Gastrocnemius medialis (tissue), 4 donors: ENCODE measurements at regions of chr7 and their contacts with region 1.

Region 1: DNA sequence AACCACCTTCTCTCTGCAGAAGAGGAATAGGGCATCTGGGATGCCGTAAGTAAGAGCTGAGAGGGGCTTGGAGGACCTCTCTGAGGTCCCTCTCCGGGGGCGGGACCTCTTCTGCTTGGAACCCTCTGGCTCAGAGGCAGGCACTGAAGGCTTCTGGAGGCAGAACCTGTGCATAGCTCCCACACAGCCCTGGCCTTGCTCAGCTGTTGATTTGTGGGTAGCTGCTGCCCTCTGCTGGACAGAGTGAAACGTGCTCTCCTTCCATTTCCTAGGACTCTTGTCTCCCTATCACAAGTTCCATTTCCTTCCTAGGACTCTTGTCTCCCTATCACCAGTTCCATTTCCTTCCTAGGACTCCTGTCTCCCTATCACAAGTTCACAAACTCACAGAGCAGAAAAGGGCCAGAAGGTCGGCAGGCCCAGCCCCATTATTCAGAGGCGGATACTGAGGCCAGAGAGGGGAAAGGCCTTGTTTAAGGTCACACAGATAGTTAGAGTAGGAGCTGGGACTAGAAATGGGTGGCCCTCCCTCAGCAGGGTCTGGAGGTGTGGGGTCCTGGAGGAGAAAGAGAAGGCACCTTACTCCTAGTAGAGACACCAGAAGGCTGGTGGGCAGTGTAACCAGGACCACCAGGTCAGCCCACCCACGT is 30.3 kb upstream of the GARS1 start:
- DNase-seq: peak; percentile 53 to 66
- ATAC-seq: peak; percentile 82 to 96
- H3K4me3 ChIP-seq: no peak overlapping the region
- H3K27ac ChIP-seq: no peak overlapping the region
- H3K4me1 ChIP-seq: no peaks in the 10 kb centered on the region
- H3K27me3 ChIP-seq: no peaks in the 10 kb centered on the region
- CTCF ChIP-seq: peak; percentile 74 to 89 (median 80)
- POLR2A ChIP-seq: no peak

Region 2: GRCh38 chr7:30276203-30276900 is 288.0 kb before region 1 on chr7:
- in situ Hi-C with region 1: no loop called
- intact Hi-C with region 1: loop called (anchors 2 kb)
- DNase-seq: peak in 1 of 2 donors; percentile 11
- ATAC-seq: peak in 1 of 2 donors; percentile 53
- H3K4me3 ChIP-seq: no peak overlapping the region
- H3K27ac ChIP-seq: no peak overlapping the region
- H3K4me1 ChIP-seq: peaks cover 14 to 18% of the 10 kb centered on the region in 2 donors
- H3K27me3 ChIP-seq: no peaks in the 10 kb centered on the region
- CTCF ChIP-seq: peak; percentile 18 to 62 (median 49)
- POLR2A ChIP-seq: no peak

Region 3: DNA sequence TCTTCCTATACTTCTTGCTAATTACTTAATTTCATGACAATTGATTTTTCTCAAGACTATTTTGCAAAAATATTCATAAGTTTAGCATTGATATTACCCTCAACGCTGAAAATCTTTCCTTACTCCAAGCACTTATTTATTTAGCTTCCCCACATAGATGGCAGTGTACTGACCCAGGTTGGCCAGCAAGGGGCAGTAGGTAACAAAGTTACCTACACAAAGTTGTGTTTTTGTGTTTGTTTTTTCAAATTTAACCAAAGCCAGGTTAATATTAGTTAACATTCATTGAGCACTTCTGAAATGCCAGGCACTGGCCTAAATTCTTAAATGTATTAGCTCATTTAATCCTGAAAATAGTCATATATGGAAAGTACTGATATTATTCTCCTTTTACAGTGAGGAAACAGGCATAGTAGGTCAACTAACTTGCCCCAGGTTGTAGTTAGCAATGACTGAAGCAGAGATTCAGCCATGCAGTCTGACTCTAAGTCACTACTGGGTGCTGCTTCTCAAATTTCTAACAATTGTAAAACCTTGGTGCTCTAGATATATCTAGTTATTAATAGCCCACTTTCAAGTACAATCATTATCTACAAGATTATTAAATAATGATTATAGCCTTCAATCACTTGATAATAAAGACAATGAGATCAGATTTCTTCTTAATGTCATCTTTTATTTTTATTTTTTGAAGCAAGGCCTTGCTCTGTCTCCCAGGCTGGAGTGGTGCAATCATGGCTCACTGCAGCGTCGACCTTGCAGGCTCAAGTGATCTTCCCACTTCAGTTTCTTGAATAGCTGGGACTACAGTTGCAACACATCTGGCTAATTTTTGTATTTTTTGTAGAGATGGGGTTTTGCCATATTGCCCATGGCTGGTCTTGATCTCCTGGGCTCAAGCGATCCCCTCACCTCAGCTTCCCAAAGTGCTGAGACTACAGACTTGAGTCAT is 54.0 kb before region 1 on chr7:
- in situ Hi-C with region 1: no loop called
- intact Hi-C with region 1: loop called (anchors 2 kb)
- DNase-seq: no peak
- ATAC-seq: no peak
- H3K4me3 ChIP-seq: no peak overlapping the region
- H3K27ac ChIP-seq: no peak overlapping the region
- H3K4me1 ChIP-seq: peaks cover 0 to 4% of the 10 kb centered on the region in 2 donors
- H3K27me3 ChIP-seq: no peaks in the 10 kb centered on the region
- CTCF ChIP-seq: peak; percentile 29 to 71 (median 55)
- POLR2A ChIP-seq: no peak

Region 4: DNA sequence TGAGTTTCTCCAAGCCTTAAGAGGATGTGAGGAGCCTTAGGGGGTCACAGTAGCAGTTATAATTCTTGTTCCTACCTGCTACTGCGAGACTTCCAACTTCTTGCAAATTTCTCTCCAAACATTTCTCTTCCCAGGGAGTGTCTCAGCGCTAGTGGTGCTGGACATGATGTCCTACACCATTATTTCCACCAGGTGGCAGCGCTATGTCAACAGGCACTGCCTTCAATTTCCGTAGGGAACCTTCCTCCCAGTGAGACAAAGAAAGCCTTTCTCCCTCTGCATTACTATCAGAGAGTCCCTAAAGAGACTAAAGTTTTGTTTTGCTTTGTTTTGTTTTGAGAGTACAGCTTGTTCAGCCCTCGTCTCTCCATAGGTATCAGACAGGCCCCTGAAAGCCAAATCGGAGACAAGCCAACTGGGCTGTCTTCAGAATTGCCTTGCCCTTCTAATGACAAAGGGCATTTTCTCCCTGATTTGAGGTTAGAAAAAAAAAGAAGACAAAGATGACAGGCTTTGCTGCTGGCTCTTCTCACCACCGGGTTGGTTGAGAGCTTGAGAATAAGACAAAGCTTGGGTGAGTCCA is 15.5 kb before region 1 on chr7:
- in situ Hi-C with region 1: no loop called
- intact Hi-C with region 1: loop called (anchors 1 kb)
- DNase-seq: peak; percentile 42 to 64
- ATAC-seq: peak; percentile 83 to 85
- H3K4me3 ChIP-seq: no peak overlapping the region
- H3K27ac ChIP-seq: peak overlapping the region in 2 of 4 donors; percentile 14 to 28
- H3K4me1 ChIP-seq: peaks cover 12 to 15% of the 10 kb centered on the region in 2 donors
- H3K27me3 ChIP-seq: no peaks in the 10 kb centered on the region
- CTCF ChIP-seq: peak; percentile 72 to 86 (median 77)
- POLR2A ChIP-seq: no peak

Region 5: DNA sequence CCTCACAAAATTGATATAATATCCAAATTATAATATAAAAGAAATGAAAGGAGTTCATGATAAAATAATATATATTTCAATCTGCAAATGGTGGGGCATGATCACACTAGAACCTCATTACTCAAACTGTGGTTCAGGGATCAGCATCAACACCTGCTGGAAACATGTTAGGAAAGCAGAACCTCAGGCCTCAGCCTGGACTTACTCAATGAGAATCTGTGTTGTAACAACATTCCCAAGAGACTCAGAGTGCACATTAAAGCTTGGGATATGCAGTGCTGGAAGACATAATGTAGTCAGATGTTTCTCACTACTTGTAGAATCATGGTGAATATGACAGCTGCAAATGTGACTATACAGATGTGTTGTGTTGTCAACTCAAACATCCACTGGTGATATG is 867.8 kb after region 1 on chr7:
- in situ Hi-C with region 1: no loop called
- intact Hi-C with region 1: no loop called
- DNase-seq: no peak
- ATAC-seq: no peak
- H3K4me3 ChIP-seq: no peak overlapping the region
- H3K27ac ChIP-seq: no peak overlapping the region
- H3K4me1 ChIP-seq: no peaks in the 10 kb centered on the region
- H3K27me3 ChIP-seq: no peaks in the 10 kb centered on the region
- CTCF ChIP-seq: no peak
- POLR2A ChIP-seq: no peak